Activated B cell treated with CpG ODN at 0.5 μM for 24 hours (primary cell): ENCODE measurements at regions of chr16 and their contacts with region 1.

Region 1: DNA sequence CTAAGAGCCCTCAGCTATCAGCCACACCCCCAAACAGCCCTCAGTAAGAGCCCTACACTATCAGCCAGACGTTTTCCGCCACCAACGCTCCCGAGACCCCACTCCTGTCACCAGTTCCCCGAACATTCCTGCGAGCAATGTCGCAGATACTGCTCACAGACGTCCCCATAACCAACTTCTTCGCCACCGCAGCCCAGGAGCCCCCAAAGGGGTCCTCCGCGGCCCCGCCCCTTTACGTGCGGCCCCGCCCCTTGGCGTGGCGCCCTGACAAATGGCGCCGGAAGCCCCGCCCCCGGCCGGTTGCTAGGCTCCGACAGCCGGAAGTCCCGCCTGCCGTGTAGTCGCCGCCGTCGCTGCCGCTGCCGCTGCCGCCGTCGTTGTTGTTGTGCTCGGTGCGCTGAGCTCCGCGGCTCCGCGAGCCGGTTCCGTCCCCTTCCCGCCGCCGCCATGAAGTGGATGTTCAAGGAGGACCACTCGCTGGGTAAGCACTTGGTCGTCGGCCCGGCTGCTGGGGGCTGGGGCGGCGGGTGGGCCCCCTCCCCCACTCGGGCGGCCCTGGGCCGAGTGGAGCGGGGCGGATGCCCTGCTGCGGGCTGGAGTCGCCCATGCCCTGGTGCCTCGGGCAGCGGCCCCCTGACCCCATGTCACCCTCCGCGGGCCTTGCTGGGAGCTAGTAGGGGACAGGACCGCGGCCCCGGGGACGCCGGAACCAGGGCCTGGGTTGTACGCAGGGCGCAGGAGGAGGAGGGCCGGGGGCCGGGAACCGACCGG is at the start of gene GABARAPL2:
- DNase-seq: peak; percentile 98
- ATAC-seq: peak; percentile 69
- H3K4me3 Mint-ChIP-seq: peak within 1 kb of the TSS; percentile 100
- H3K27ac Mint-ChIP-seq: peak within 1 kb of the TSS; percentile 98
- H3K4me1 Mint-ChIP-seq: peaks cover 57% of the 10 kb centered on the region
- H3K27me3 Mint-ChIP-seq: no peaks in the 10 kb centered on the region
- CTCF ChIP-seq: no peak
- total RNA-seq, gene GABARAPL2: 62.9 and 69.4 TPM in 2 replicates

Region 2: GRCh38 chr16:75379911-75380847 is 186.0 kb before region 1 on chr16:
- CTCF ChIA-PET with region 1: no interaction called
- POLR2A ChIA-PET with region 1: no interaction called
- intact Hi-C with region 1: loop called (anchors 5 kb)
- DNase-seq: peak; percentile 37
- ATAC-seq: peak; percentile 97
- H3K4me3 Mint-ChIP-seq: peak overlapping the region; percentile 48
- H3K27ac Mint-ChIP-seq: no peak overlapping the region
- H3K4me1 Mint-ChIP-seq: peaks cover 28% of the 10 kb centered on the region
- H3K27me3 Mint-ChIP-seq: peaks cover 70% of the 10 kb centered on the region
- CTCF ChIP-seq: no peak

Region 3: DNA sequence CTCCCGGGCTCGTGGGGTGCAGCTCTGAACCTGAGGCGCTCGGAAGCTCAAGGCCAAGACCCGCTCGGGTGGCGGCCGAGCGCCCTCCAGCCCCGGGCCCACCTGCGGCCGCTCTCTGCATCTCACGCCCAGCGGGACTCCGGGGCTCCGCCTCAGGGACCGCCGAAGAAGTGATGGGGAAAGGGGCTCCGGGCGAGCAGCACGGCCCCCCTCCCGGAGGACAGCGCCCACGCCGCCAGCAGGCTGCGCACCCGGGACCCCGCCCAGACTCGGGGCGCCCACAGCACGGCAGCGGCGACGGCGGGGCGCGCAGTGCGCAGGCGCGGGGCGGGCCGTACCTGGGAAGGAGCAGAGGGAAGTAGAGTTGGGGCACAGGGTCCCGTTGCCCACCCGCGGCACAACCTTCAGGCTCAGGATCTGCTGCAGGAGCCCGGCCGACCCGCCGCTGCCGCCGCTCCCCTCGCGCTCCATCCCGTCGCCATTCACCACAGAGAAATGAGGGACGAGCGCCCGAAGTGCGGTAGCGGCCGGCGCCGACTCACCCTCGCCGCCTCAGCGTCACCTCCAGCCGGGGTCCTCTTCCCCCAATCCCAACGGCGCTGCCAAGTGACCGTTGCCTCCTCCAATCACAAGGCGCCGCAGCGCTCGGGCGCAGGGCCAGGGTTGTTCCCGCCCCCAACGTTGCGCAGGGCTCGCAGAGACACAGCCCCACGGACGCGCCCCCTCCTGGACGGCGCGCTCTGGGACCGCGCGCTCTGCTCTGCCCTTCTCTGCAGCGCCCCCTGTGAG is 101.9 kb before region 1 on chr16 and contains the start of gene TMEM170A:
- CTCF ChIA-PET with region 1: interaction called, 4 read pairs
- POLR2A ChIA-PET with region 1: interaction called, 5 read pairs
- intact Hi-C with region 1: loop called (anchors 1 kb)
- DNase-seq: peak; percentile 98
- ATAC-seq: peak; percentile 95
- H3K4me3 Mint-ChIP-seq: peak within 1 kb of the TSS; percentile 92
- H3K27ac Mint-ChIP-seq: peak within 1 kb of the TSS; percentile 89
- H3K4me1 Mint-ChIP-seq: peaks cover 41% of the 10 kb centered on the region
- H3K27me3 Mint-ChIP-seq: no peaks in the 10 kb centered on the region
- CTCF ChIP-seq: peak; percentile 99
- total RNA-seq, gene TMEM170A: 25.3 and 28.3 TPM in 2 replicates

Region 4: DNA sequence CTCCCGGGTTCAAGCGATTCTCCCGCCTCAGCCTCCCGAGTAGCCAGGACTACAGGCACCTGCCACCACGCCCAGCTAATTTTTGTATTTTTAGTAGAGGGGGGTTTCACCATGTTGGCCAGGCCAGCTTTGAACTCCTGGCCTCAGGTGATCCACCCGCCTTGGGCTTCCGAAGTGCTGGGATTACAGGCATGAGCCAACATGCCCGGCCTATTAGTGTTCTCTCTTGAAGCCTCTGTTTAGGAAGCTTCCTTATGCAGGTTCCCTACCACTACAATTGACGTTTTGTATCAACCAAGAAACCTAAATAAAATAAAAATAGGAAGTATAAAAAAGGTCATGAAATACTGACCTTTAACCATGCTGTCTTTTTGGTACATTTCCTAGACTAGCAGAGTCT is 46.3 kb before region 1 on chr16:
- CTCF ChIA-PET with region 1: interaction called, 6 read pairs
- POLR2A ChIA-PET with region 1: interaction called, 15 read pairs
- intact Hi-C with region 1: loop called (anchors 1 kb)
- DNase-seq: no peak
- ATAC-seq: no peak
- H3K4me3 Mint-ChIP-seq: no peak overlapping the region
- H3K27ac Mint-ChIP-seq: no peak overlapping the region
- H3K4me1 Mint-ChIP-seq: peaks cover 13% of the 10 kb centered on the region
- H3K27me3 Mint-ChIP-seq: no peaks in the 10 kb centered on the region
- CTCF ChIP-seq: no peak

Region 5: DNA sequence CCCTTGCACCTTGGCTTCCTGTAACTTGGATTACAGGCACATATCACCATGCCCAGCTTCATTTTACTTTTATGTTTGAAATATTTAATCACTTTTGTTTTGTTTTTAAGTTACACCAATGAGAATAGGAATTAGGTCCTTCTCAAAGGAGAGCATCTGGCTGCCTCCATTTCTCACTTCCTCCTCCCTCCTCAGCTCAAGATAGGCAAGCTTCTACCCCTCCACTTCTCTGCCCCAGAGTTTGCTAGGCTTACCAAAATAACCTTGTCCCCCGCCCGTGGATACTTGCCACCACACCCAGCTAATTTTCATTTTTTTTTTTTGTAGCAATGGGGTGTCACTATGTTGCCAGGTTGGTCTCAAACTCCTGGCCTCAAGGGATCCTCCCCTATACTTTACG is 17.9 kb after region 1 on chr16:
- CTCF ChIA-PET with region 1: interaction called, 3 read pairs
- POLR2A ChIA-PET with region 1: interaction called, 3 read pairs
- intact Hi-C with region 1: loop called (anchors 2 kb)
- DNase-seq: no peak
- ATAC-seq: peak; percentile 91
- H3K4me3 Mint-ChIP-seq: peak overlapping the region; percentile 19
- H3K27ac Mint-ChIP-seq: peak overlapping the region; percentile 65
- H3K4me1 Mint-ChIP-seq: peaks cover 54% of the 10 kb centered on the region
- H3K27me3 Mint-ChIP-seq: no peaks in the 10 kb centered on the region
- CTCF ChIP-seq: no peak

Region 6: GRCh38 chr16:75622761-75623605 is 56.8 kb after region 1 on chr16 and contains the start of gene ADAT1:
- CTCF ChIA-PET with region 1: no interaction called
- POLR2A ChIA-PET with region 1: interaction called, 28 read pairs
- intact Hi-C with region 1: loop called (anchors 1 kb)
- DNase-seq: peak; percentile 93
- ATAC-seq: peak; percentile 97
- H3K4me3 Mint-ChIP-seq: peak within 1 kb of the TSS; percentile 98
- H3K27ac Mint-ChIP-seq: peak within 1 kb of the TSS; percentile 95
- H3K4me1 Mint-ChIP-seq: peaks cover 22% of the 10 kb centered on the region
- H3K27me3 Mint-ChIP-seq: no peaks in the 10 kb centered on the region
- CTCF ChIP-seq: no peak
- total RNA-seq, gene ADAT1: 52.7 and 57.2 TPM in 2 replicates

Region 7: DNA sequence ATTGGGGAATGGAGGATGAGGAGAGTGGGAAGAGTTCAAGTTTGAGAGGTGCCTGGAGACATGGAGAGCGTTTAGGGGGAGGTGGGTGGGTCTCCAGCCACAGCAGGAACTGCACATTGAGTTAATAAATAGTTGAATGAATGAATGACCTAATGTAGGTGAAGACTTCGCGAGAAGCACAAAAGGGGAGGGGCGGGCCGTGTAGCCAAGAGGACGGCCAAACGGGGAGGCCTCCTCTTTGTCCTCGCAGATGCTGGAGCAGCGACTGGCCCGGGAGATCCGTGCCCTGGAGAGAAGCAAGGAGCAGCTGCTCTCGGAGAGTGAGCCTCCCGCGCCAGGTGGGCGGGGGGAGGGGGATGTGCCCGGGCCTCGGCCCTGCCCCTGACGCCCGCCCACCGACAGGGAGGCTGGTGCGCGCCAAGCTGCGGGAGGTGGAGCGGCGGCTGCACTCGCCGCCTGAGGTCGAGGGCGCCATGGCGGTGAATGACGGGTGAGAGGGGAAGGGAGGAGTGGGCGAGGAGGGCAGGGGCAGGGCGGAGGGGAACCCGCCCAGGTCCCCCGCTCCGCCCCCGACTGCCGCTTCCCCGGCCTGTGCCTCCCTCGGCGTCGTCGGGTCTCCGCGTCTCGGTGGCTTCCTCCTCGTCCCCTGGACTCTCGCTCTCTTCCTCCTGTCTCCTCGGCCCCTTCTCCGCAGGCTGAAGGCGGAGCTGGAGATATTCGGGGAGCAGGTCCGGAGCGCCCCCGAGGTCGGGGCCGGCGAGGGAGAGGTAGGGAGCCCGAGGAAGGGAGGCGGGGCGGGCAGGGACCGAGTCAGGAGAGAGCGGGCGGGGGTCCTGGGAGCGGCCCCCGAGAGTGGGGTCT is 1645.9 kb after region 1 on chr16:
- CTCF ChIA-PET with region 1: no interaction called
- POLR2A ChIA-PET with region 1: no interaction called
- intact Hi-C with region 1: loop called (anchors 5 kb)
- DNase-seq: peak; percentile 63
- ATAC-seq: peak; percentile 71
- H3K4me3 Mint-ChIP-seq: peak overlapping the region; percentile 89
- H3K27ac Mint-ChIP-seq: peak overlapping the region; percentile 37
- H3K4me1 Mint-ChIP-seq: peaks cover 9% of the 10 kb centered on the region
- H3K27me3 Mint-ChIP-seq: no peaks in the 10 kb centered on the region
- CTCF ChIP-seq: no peak